ENCODE measurements at regions of chr1 and their contacts with region 1.

Region 1: DNA sequence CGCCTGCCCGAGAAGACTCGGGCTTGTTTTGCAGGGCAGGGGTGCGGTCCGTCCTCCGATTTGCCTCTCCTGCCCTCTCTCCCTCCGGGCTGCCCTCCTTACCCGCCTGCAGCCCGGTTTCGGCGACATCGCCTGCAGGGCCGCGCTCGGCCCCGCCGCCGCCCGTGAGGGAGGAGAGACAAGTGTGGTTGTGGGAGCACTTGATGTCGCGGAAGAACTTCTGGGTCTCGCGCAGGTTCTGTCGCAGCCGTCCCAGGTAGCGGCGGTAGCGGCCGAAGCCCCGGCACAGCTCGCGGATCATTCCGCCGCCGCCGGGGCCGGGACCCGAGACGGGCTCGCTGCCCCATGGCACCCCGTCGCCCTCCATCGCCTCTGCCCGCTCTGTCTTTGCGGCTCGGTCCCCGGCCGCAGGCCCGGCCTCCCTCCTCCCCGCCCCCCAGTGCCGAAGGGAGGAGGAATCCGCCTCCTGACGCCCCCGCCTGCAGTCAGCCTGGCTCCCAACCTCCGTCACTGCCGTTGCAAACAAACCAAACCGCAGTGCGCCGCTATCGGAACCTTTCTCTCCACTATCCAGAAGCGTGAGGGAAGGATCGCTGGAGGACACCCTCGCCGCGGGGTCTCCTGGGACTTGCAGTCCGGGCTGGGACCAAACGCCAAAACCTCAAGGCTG is at the start of gene DSTYK:
- DNase-seq: peak; percentile 99
- H3K4me3 Mint-ChIP-seq: peak within 1 kb of the TSS; percentile 73
- H3K27ac Mint-ChIP-seq: peak within 1 kb of the TSS; percentile 94
- H3K4me1 Mint-ChIP-seq: peaks cover 12% of the 10 kb centered on the region
- H3K27me3 Mint-ChIP-seq: peaks cover 12% of the 10 kb centered on the region
- CTCF ChIP-seq: no peak
- total RNA-seq, gene DSTYK: 18.4 and 21.5 TPM in 2 replicates

Region 2: DNA sequence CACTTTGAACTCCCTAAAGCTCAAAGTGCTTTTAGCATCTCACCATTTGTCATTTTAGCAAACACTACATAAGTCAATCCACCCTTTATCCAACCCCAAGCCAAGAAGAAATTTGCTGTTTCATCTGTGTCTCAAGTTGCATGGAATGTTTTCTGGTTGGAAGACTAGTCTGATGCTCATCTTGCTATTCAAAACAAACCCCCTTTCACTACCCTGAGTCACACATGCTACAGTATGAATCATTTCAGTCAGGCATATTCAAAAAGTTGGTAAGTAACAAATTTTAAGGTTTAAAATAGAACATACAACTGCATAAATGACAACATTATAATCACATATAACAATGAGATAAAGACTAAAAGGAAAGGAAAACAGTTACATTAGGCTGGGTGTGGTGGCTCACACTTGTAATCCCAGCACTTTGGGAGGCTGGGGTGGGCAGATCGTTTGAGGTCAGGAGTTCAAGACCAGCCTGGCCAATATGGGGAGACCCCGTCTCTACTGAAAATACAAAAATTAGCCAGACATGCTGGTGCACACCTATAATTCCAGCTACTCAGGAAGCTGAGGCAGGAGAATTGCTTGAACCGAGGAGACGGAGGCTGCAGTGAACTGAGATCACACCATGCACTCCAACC is 38.5 kb before region 1 on chr1:
- CTCF ChIA-PET with region 1: no interaction called
- POLR2A ChIA-PET with region 1: interaction called, 31 read pairs
- intact Hi-C with region 1: loop called (anchors 1 kb)
- DNase-seq: peak; percentile 93
- H3K4me3 Mint-ChIP-seq: no peak overlapping the region
- H3K27ac Mint-ChIP-seq: peak overlapping the region; percentile 95
- H3K4me1 Mint-ChIP-seq: peaks cover 15% of the 10 kb centered on the region
- H3K27me3 Mint-ChIP-seq: no peaks in the 10 kb centered on the region
- CTCF ChIP-seq: no peak

Region 3: DNA sequence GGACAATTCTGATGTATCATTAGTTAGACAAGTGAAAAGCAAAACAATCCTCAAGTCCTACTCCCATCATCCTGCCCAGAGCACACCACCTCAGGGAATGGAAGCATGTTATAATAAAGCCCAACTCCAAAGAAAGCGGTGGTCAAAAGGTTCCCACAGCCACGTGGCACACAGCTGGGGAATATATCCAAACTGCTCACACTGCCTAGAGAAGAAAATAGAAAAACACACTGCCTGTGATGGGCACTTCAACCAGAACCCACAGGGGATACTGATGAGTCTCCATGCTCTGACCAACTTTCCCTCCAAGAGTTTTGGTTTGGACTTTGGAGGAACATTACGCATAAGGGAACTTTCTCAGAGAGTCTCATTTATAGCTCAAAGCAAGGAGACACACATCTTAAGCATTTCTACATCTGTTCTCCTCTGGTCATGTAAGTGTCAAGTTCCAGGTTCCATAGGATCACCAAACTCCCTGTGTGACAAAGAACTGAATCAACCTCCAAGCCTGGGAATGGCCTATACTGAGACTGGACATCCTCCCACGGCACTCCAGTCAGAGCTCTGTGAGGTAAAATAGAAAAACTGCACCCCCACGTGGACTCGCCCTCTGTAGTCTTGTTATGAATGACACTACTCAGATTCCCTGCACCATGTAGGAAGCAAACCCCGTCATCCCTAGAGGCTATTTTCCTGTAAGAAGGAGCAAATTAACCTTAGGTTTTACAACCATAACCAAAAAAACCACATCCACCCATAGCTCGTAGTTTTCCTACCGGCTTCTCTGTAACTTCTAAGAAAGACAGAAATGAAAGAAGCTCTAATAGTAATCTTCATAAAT is 12.0 kb before region 1 on chr1:
- CTCF ChIA-PET with region 1: interaction called, 5 read pairs
- POLR2A ChIA-PET with region 1: interaction called, 26 read pairs
- intact Hi-C with region 1: no loop called
- DNase-seq: no peak
- H3K4me3 Mint-ChIP-seq: no peak overlapping the region
- H3K27ac Mint-ChIP-seq: no peak overlapping the region
- H3K4me1 Mint-ChIP-seq: peaks cover 17% of the 10 kb centered on the region
- H3K27me3 Mint-ChIP-seq: no peaks in the 10 kb centered on the region
- CTCF ChIP-seq: no peak

Measured in MCF 10A (cell line).